Activated naive CD4-positive, alpha-beta T cell treated with anti-CD3 and anti-CD28 coated beads, Interleukin-2, amount 10 ng/mL, durations not matched to agents 7 days and 5 days (primary cell): ENCODE measurements at regions of chr7 and their contacts with region 1.

Region 1: DNA sequence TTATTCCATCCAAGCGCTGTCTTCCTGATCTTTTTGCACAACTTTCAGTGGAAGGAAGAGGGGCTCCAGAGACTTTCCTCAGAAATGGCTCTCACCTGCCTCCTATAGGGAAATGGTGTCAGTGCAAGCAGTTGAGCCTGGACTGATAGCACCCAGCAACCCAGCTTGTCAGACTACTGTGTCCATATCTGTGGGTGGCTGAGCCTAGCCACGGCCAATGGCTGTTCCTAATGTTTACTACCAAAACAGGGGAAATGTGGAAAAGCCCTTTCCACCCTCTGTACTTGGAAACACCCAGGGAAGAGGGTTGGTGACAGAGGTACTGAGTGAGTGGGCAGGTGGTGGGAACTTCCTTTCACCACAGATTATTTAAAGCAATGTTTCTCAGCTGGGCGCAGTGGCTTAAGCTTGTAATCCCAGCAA is 4.3 kb upstream of the YKT6 start:
- DNase-seq: peak; percentile 57
- H3K4me3 Mint-ChIP-seq: no peak overlapping the region
- H3K27ac Mint-ChIP-seq: no peak overlapping the region
- H3K4me1 Mint-ChIP-seq: peaks cover 13% of the 10 kb centered on the region
- H3K27me3 Mint-ChIP-seq: peaks cover 22% of the 10 kb centered on the region

Region 2: DNA sequence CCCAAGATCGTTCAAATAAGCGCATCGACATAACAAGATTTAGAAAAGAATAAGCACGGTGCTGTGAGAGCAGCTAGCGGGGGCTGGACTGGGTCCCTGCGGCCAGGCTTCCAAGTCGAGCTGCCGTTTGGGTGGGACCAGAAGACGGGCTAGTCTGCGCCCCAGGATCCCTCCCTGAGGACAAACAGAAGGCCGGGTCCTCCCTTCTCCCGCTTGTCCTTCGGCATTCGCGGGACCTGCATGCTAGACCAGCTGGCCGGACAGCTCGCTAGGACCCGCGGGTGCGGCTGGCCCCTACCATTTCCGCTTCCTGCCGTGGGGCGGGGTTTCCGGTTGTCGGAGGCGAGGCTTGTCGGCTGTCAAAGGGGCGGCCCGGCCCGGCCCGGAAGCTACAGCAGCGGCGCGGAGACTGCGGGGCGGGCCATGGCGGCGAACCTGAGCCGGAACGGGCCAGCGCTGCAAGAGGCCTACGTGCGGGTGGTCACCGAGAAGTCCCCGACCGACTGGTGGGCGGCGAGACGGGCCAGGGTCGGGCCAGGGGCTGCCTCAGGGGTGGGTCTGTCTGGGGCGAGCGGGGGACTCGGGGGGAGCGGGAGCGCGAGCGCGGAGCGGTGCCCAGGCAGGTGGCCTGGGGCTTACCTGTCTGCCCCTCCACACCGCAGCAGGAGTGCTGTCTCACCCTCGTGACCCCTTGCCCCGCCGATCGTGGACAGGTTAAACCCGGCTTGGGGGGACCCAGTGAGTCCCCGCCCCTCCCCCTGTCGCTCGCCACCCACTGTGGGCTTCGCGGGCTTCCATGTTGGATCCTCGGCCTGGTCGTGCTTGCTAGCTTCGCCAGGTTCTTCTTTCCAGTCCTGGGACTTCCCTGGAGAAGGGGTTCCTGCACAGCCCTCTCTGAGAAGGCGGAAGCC is 151.9 kb before region 1 on chr7 and contains the start of gene DBNL:
- CTCF ChIA-PET with region 1: no interaction called
- DNase-seq: peak; percentile 96
- H3K4me3 Mint-ChIP-seq: peak within 1 kb of the TSS; percentile 75
- H3K27ac Mint-ChIP-seq: peak within 1 kb of the TSS; percentile 88
- H3K4me1 Mint-ChIP-seq: peaks cover 61% of the 10 kb centered on the region
- H3K27me3 Mint-ChIP-seq: no peaks in the 10 kb centered on the region

Region 3: DNA sequence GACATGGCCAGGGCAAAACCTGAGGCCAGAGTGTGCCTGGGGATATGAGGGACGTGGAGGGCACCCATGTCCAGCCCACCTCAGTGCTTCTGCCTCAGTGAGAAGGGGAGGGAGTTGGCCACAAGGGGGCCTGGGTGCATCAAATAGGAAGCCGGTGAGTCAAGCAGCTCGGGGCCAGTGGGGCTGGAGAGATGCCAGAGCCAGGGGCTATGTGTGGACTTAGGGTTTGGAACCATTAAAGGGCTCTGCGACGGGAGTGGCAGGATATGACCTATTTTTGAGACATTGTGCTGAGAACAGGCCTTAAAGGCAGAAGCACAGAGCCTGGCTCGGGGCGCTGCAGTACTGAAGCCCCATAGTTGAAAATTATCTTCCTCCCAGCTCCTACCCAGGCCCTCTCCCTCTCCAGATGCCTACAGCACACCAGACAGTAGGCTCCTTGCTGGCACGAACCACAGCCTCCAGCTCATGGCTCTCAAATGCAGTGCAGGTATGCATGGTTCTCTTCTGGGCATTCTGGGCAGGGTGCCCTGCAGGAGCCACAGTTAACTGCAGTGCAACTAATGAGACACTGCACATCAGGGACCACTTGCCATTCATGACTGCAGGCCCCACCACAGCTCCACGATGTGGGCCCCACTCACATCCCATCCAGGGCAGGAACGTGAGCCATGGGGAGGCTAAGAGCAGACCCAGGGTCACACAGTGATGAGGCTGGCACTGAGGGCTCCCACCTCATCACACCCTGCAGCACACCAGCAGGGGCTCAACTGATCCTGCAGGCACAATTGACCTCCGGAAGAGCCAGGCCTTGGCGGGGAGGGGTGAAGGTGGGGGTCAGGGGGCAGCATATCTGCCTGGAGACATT is 123.9 kb before region 1 on chr7:
- CTCF ChIA-PET with region 1: interaction called, 10 read pairs
- DNase-seq: peak; percentile 58
- H3K4me3 Mint-ChIP-seq: no peak overlapping the region
- H3K27ac Mint-ChIP-seq: peak overlapping the region; percentile 21
- H3K4me1 Mint-ChIP-seq: peaks cover 5% of the 10 kb centered on the region
- H3K27me3 Mint-ChIP-seq: peaks cover 6% of the 10 kb centered on the region

Region 4: DNA sequence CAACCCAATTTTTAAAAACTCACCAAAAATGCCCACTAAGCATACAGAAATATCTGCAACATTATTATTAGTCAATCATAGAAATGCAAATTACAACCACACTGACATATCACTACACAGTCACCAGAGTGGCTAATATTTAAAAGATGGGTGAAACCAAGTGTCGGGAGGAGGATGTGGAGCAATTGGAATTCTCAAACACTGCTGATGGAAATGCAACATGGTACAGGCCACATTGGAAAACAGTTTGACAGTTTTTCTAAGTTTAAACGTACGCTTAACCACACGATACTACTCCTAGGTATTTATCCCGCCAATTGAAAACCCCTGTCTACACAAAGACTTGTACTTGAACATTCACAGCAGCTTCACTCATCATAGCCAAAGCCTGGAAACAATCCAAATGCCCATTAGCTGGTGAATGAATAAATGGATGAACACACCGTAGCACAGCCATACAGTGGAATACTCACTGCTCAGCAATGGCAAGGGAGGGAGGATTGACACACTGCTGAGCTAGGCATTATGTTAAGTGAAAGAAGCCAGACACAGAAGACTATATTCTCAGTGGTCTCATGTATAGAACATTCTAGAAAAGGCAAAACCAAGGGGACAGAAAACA is 23.5 kb before region 1 on chr7:
- CTCF ChIA-PET with region 1: no interaction called
- DNase-seq: no peak
- H3K4me3 Mint-ChIP-seq: no peak overlapping the region
- H3K27ac Mint-ChIP-seq: no peak overlapping the region
- H3K4me1 Mint-ChIP-seq: peaks cover 4% of the 10 kb centered on the region
- H3K27me3 Mint-ChIP-seq: peaks cover 38% of the 10 kb centered on the region

Region 5: DNA sequence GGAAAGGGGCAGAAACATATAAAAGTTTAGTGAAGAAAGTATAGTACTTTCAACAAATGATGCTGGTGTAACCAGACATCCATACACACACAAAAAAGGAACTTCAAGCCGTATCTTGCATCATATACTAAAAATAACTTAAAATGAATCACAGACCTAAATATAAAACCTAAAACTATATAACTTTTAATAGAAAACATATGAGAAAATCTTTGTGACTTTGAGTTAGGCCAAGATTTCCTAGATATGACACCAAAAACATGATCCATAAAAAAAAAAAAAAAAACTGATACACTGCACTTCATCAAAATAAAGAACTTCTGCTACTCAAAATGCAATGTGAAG is 253.1 kb after region 1 on chr7:
- CTCF ChIA-PET with region 1: no interaction called
- DNase-seq: no peak
- H3K4me3 Mint-ChIP-seq: no peak overlapping the region
- H3K27ac Mint-ChIP-seq: no peak overlapping the region
- H3K4me1 Mint-ChIP-seq: peaks cover 21% of the 10 kb centered on the region
- H3K27me3 Mint-ChIP-seq: no peaks in the 10 kb centered on the region